Dorsolateral prefrontal cortex (tissue), 120 donors: ENCODE measurements at regions of chr11 and their contacts with region 1.

Region 1: GRCh38 chr11:95764267-95764898 is 25.2 kb downstream of the FAM76B start:
- DNase-seq: no peak
- H3K4me3 ChIP-seq: peak overlapping the region in 2 of 59 donors; percentile 12 to 22
- H3K27ac ChIP-seq: no peak overlapping the region
- H3K27me3 ChIP-seq: no peaks in the 10 kb centered on the region
- CTCF ChIP-seq: peak; percentile 69 to 99 (median 85)

Region 2: DNA sequence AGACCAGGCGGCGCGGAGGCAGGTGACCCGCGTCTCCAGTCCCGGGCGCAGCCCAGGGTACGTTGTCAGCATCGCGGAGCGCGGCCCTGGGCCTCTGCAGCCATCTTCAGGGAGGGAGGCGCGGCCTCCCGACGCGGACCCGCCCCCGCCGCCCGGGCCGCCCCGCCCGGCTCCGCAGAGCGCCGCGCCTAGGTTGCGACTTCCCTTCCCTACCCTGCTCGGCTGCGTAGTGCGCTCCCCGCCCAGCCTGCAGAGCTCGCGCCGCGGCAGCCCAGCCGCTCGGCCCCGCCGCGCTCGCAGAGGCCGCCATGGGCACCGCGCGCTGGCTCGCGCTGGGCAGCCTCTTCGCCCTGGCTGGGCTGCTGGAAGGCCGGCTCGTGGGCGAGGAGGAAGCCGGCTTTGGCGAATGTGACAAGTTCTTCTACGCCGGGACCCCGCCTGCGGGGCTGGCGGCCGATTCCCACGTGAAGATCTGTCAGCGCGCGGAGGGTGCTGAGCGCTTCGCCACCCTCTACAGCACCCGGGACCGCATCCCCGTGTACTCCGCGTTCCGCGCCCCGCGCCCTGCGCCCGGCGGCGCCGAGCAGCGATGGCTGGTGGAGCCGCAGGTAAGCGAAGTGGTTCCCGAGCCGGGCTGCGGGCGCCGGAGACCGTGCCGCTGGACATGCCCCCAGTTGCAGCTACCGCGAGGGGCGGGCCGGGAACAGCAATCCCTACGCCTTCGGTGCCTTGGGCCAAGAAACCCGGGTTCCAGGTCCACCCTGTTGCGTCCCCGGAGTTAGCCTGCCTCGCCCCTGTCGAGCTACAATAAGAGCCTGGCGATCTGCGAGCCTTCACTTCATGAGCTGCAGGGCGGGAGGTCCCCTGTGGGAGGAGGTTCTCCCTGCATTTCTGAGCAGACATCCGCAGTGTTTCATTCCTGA is 674.5 kb before region 1 on chr11 and contains the start of gene ENDOD1:
- intact Hi-C with region 1: loop called in 1 of 2 experiments (anchors 10 kb)
- DNase-seq: peak; percentile 47 to 90 (median 79)
- H3K4me3 ChIP-seq: peak within 1 kb of the TSS; percentile 61 to 99 (median 91)
- H3K27ac ChIP-seq: peak within 1 kb of the TSS; percentile 92 to 100 (median 98)
- H3K27me3 ChIP-seq: no peaks in the 10 kb centered on the region
- CTCF ChIP-seq: peak in 36 of 56 donors; percentile 7 to 56 (median 26)
- total RNA-seq, gene ENDOD1: 49.1 to 144 (median 71.1) TPM

Region 3: DNA sequence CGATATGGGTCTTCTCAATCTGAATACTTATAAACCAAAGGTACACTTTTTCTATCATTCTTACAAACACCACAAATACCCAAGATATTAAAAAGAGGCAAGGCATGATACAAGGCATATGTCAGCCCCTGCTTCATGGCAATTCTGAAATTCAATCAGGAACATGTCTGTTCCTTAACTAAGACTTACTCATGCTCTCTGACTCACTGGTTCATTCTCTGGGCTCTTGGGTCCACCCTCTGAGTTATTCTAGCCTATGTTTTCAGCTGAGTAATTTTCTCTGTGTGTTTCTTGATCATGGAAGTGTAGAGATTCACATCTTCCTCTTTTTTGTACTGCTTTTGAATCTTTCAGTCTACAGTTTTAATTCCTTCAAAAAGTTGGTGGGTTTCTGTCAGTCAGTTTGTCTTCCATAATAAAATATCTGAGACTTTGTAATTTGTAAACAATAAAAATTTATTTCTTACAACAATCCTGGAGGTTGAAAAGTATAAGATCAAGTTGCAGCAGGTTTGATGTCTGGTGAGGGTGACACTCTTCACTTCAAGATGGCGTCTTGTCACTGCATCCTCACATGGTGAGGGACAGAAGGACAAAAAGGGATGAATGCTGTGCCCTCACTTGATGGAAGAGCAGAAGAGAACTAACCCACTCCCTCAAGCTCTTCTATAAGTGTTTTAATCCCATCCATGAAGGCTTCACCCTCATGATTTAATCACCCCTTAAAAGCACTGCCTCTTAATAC is 186.5 kb before region 1 on chr11:
- intact Hi-C with region 1: loop called in 1 of 2 experiments (anchors 10 kb)
- DNase-seq: no peak
- H3K4me3 ChIP-seq: no peak overlapping the region
- H3K27ac ChIP-seq: peak overlapping the region in 1 of 59 donors; percentile 55
- H3K27me3 ChIP-seq: no peaks in the 10 kb centered on the region
- CTCF ChIP-seq: peak in 5 of 56 donors; percentile 8 to 34 (median 15)

Region 4: GRCh38 chr11:95705485-95706124 is 58.8 kb before region 1 on chr11:
- intact Hi-C with region 1: loop called (anchors 10 kb)
- DNase-seq: peak; percentile 68 to 91 (median 86)
- H3K4me3 ChIP-seq: peak overlapping the region in 5 of 59 donors; percentile 6 to 32 (median 15)
- H3K27ac ChIP-seq: peak overlapping the region in 55 of 59 donors; percentile 2 to 93 (median 57)
- H3K27me3 ChIP-seq: no peaks in the 10 kb centered on the region
- CTCF ChIP-seq: peak; percentile 77 to 97 (median 94)